ENCODE measurements at regions of chr7 and their contacts with region 1.

Region 1: DNA sequence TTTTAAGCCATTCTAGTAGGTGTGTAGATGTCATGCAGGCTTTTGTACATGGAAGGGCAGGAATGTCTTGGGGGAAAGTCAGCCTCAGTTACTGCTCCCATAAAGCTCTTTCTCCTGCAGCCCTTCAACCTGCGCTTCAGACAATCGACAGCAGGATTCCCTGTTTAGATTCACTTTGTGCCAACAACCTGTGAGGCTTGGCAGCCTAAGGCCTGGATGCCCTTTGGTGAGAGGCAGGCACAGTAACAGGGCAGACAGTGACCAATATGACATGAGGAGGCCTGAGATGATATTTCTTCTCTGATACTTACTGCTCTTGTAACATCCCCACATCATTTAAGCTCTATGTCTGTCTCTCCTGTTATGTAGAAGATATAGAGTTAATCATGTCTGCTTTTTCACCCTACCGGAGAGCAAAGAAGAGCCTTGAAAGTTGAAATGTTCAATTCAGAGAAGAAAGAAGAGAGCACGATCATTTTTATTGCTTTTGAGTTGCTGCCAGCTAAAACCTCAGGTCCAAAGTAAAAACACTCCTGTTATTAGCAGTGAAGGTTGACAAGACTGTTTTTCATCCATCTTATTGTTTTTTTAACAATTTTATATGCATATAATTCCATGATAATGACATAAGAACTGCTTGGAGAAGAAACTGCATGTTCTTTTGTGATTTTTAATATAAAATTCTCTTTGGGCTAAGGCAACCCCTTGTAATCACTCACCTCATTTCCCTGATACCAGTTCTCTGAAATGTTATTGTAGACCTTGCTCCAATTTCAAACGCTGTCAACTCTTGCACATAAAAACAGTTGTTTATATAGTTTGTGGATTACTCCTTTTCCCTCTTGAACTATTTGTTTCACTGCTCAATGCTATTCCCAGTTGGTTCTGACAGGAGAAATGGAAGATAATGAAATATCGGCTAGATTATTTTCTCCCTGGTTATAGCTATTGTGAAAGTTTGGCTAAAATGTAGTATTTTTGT is 140.9 kb downstream of the GALNT17 start:
- DNase-seq: no peak
- ATAC-seq: no peak
- H3K4me3 ChIP-seq: no peak overlapping the region
- H3K27ac ChIP-seq: no peak overlapping the region
- H3K4me1 ChIP-seq: peaks cover 0 to 6% (median 0%) of the 10 kb centered on the region in 3 donors
- H3K27me3 ChIP-seq: no peaks in the 10 kb centered on the region
- CTCF ChIP-seq: no peak

Region 2: DNA sequence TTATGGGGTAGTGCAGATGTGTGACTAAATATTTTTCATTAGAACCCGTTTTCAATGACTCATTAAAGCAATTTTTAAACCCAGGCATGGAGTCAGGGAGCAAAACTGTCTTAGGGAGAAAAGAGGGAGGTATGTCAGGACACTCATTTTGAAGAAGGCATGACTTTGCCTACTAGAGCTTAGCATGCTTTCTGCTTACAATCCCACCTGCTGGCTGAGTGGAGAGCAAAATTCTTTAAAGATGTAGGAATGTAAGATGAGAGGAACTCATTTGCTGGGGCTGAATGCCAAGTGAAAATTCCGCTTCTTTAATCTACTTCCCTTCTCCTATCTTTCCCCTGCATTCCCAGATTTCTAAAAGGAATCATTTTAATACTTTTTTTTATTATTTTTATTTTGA is 91.8 kb after region 1 on chr7:
- intact Hi-C with region 1: loop called in 1 of 3 experiments (anchors 10 kb)
- DNase-seq: no peak
- ATAC-seq: no peak
- H3K4me3 ChIP-seq: no peak overlapping the region
- H3K27ac ChIP-seq: no peak overlapping the region
- H3K4me1 ChIP-seq: peaks cover 0 to 3% (median 0%) of the 10 kb centered on the region in 3 donors
- H3K27me3 ChIP-seq: no peaks in the 10 kb centered on the region
- CTCF ChIP-seq: no peak

Measured in pancreas (tissue), 10 donors.